ENCODE measurements at regions of chr6 and their contacts with region 1.

Region 1: DNA sequence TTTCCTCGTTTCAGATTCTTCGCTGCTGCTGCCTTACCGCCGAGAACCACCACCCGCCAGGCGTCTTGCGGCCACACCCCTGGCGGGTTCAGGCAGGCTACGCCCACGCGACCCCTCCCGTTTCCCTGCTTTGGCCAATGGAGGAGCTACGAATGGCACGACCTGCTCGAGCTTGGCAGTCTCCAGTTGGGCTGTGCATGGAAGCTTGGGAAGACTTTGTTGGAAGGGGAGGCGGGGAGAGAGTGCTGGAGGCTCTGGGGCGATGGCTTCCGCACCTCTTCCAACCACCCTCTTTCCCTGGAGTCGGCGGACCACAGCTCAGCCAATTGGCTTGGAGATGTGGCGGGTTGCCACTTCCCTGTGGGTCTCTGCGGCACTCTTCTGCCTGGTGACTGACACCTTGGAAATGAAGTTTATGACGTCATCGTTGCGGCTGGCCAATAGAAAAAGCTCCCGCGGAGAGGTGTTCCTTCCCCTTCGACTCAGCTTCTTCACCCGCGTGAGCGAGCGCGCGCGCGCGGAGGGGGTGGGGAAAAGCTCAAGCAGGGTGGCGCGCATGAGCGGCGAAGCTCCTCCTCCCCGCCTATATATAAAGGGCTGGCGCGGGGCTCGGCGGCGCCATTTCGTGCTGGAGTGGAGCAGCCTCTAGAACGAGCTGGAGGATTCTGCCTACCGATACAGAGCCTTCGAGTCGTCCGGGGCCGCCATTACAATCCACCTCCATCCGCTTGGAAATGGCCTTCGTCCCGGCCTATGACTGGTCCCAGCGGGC is 3.4 kb downstream of the BRD2 start:
- DNase-seq: peak; percentile 99 to 100 (median 100)
- ATAC-seq: peak; percentile 73
- H3K4me3 ChIP-seq: peak overlapping the region; percentile 98
- H3K4me3 Mint-ChIP-seq: peak overlapping the region; percentile 89 to 100 (median 98)
- H3K27ac ChIP-seq: peak overlapping the region; percentile 94
- H3K27ac Mint-ChIP-seq: peak overlapping the region; percentile 78 to 100 (median 99)
- H3K4me1 ChIP-seq: peaks cover 26 to 32% of the 10 kb centered on the region in 2 donors
- H3K4me1 Mint-ChIP-seq: peaks cover 31 to 47% (median 40%) of the 10 kb centered on the region in 7 donors
- H3K27me3 ChIP-seq: no peaks in the 10 kb centered on the region
- H3K27me3 Mint-ChIP-seq: peaks cover 0 to 5% (median 0%) of the 10 kb centered on the region in 5 donors

Region 2: DNA sequence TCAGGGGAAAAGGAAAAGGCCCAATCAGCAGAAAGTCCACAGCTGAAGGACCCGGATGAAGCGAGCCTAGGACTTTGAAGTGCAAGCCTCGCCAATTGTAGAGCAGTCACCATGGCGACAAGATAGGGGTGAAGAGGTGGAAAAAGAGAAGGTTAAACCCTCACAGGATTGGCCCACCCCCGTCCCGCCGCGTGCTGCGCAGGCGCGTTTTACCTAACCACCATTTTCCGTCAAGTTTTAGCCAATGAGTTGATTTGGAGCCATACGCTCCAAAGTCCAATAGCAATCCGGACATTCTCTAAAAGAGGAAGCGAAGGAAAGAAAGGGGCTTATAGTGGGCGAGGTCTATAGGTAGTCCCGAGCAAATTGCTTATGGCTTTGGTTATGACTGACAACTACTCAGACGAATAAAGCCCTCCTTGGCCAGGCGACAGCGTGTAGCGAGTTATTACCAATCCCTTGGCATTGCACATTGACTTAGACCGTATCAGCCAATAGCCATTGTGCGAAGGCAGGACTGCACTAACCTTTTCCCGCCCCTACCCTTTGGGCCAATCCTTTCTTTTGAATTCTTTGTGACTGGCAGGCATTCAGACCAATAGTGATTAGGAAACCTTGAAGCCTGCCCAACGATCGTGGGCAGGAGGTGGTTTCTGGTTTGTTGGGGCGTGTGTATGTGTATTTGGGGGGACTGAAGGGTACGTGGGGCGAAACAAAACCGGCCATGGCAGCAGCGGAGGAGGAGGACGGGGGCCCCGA is 793.8 kb before region 1 on chr6 and contains the start of gene RNF5:
- CTCF ChIA-PET with region 1: no interaction called
- POLR2A ChIA-PET with region 1: interaction called, 7 read pairs
- intact Hi-C with region 1: loop called (anchors 1 to 5 kb)
- DNase-seq: peak; percentile 60 to 99 (median 97)
- ATAC-seq: peak; percentile 89
- H3K4me3 ChIP-seq: peak within 1 kb of the TSS; percentile 82
- H3K4me3 Mint-ChIP-seq: peak within 1 kb of the TSS; percentile 85 to 98 (median 95)
- H3K27ac ChIP-seq: peak within 1 kb of the TSS; percentile 91
- H3K27ac Mint-ChIP-seq: peak within 1 kb of the TSS; percentile 87 to 100 (median 95)
- H3K4me1 ChIP-seq: peaks cover 31 to 63% of the 10 kb centered on the region in 2 donors
- H3K4me1 Mint-ChIP-seq: peaks cover 63 to 86% (median 69%) of the 10 kb centered on the region in 7 donors
- H3K27me3 ChIP-seq: no peaks in the 10 kb centered on the region
- H3K27me3 Mint-ChIP-seq: no peaks in the 10 kb centered on the region
- total RNA-seq, gene RNF5: 17.0 to 50.6 (median 40.9) TPM

Region 3: DNA sequence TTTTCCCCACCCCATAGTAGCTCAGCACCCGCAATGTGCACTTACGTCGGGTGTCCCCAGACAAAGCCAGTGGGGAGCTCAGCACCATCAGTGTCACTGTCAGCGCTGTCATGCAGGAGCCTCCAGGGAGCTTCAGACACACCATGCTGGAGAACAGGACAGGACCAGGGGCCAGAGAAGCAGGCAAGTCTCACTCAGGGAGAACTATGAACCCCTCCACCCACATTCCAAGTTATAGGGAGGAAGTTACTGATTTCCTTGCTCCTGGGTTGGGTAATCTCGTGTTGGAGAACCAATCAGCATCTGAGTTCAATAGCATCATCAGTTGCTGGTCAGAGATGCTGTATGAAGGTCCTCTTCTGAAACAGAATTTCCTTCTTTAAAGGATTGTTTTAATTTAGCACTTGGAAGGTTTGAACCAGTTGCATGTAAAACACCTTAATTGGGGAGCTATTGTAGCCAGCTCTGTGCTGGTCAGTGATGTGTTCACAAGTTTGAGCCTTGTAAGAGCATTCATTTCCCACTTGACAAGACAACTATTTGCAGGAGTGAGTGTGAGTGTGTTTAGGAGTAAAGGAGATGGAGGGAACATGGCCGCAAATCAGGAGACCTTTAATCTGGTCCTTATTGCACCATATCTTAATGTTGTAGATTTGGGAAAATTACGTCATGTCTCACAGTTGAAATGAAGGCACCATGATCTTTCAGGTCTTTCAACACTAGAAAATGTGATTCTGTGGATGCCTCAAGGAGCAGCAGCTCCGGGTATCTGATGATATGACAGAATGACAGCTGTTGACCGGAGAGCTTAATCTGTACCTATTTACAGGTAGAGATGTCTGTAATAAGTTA is 381.9 kb before region 1 on chr6 and contains the start of gene HLA-DRB1:
- CTCF ChIA-PET with region 1: no interaction called
- POLR2A ChIA-PET with region 1: no interaction called
- intact Hi-C with region 1: no loop called
- DNase-seq: peak in 3 of 9 donors; percentile 22 to 59 (median 30)
- ATAC-seq: peak; percentile 96
- H3K4me3 ChIP-seq: peak within 1 kb of the TSS; percentile 48
- H3K4me3 Mint-ChIP-seq: peak within 1 kb of the TSS in 8 of 10 donors; percentile 13 to 83 (median 69)
- H3K27ac ChIP-seq: no peak within 1 kb of the TSS
- H3K27ac Mint-ChIP-seq: peak within 1 kb of the TSS in 2 of 9 donors; percentile 15 to 77
- H3K4me1 ChIP-seq: no peaks in the 10 kb centered on the region
- H3K4me1 Mint-ChIP-seq: peaks cover 0 to 25% (median 6%) of the 10 kb centered on the region in 7 donors
- H3K27me3 ChIP-seq: no peaks in the 10 kb centered on the region
- H3K27me3 Mint-ChIP-seq: peaks cover 0 to 5% (median 4%) of the 10 kb centered on the region in 5 donors
- total RNA-seq, gene HLA-DRB1: 16.4 to 229 (median 52.1) TPM

Region 4: DNA sequence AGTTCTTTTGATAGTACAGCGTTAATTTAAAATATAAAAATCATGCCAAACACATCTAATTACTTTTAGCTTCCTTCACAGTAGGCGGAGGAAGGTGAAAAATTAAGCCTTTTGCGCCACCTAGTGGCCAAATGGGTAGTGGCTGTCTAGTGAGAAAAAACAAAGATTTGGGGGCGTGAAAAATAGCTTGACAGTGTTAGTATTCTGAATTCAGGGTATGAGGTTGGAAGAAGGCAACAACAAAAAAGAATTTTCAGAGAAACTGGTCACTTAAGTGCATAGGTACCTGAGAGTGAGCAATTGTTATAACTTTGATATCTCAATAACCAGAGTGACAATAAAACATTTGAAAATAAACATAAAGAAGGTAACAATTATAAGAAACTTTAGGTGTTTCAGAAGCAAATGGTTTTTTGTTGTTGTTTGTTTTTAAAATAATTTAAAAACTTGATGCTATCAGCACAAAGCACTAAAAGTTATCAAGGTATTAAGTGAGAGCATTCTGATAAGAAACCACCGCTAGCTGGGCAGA is 103.4 kb before region 1 on chr6:
- CTCF ChIA-PET with region 1: interaction called, 11 read pairs
- POLR2A ChIA-PET with region 1: interaction called, 17 read pairs
- intact Hi-C with region 1: no loop called
- DNase-seq: peak; percentile 69 to 87 (median 82)
- ATAC-seq: peak; percentile 87
- H3K4me3 ChIP-seq: no peak overlapping the region
- H3K4me3 Mint-ChIP-seq: peak overlapping the region in 3 of 10 donors; percentile 0 to 65 (median 50)
- H3K27ac ChIP-seq: no peak overlapping the region
- H3K27ac Mint-ChIP-seq: peak overlapping the region in 4 of 9 donors; percentile 1 to 78 (median 14)
- H3K4me1 ChIP-seq: peaks cover 4 to 20% of the 10 kb centered on the region in 2 donors
- H3K4me1 Mint-ChIP-seq: peaks cover 18 to 36% (median 34%) of the 10 kb centered on the region in 7 donors
- H3K27me3 ChIP-seq: no peaks in the 10 kb centered on the region
- H3K27me3 Mint-ChIP-seq: peaks cover 0 to 4% (median 0%) of the 10 kb centered on the region in 5 donors

Region 5: GRCh38 chr6:32952817-32953739 is 18.7 kb before region 1 on chr6 and contains the start of gene HLA-DMA:
- CTCF ChIA-PET with region 1: interaction called, 229 read pairs
- POLR2A ChIA-PET with region 1: interaction called, 638 read pairs
- intact Hi-C with region 1: loop called (anchors 1 kb)
- DNase-seq: peak; percentile 52 to 89 (median 83)
- ATAC-seq: peak; percentile 96
- H3K4me3 ChIP-seq: peak within 1 kb of the TSS; percentile 64
- H3K4me3 Mint-ChIP-seq: peak within 1 kb of the TSS; percentile 75 to 86 (median 82)
- H3K27ac ChIP-seq: peak within 1 kb of the TSS; percentile 63
- H3K27ac Mint-ChIP-seq: peak within 1 kb of the TSS; percentile 61 to 94 (median 88)
- H3K4me1 ChIP-seq: peaks cover 21 to 23% of the 10 kb centered on the region in 2 donors
- H3K4me1 Mint-ChIP-seq: peaks cover 44 to 57% (median 48%) of the 10 kb centered on the region in 7 donors
- H3K27me3 ChIP-seq: no peaks in the 10 kb centered on the region
- H3K27me3 Mint-ChIP-seq: no peaks in the 10 kb centered on the region
- total RNA-seq, gene HLA-DMA: 12.5 to 120 (median 29.6) TPM

Region 6: GRCh38 chr6:33276864-33277662 is 305.3 kb after region 1 on chr6 and contains the start of gene B3GALT4:
- CTCF ChIA-PET with region 1: no interaction called
- POLR2A ChIA-PET with region 1: interaction called, 24 read pairs
- intact Hi-C with region 1: loop called in 1 of 2 experiments (anchors 5 kb)
- DNase-seq: peak; percentile 55 to 88 (median 63)
- ATAC-seq: peak; percentile 81
- H3K4me3 ChIP-seq: peak within 1 kb of the TSS; percentile 67
- H3K4me3 Mint-ChIP-seq: peak within 1 kb of the TSS; percentile 84 to 99 (median 92)
- H3K27ac ChIP-seq: peak within 1 kb of the TSS; percentile 87
- H3K27ac Mint-ChIP-seq: peak within 1 kb of the TSS; percentile 88 to 98 (median 93)
- H3K4me1 ChIP-seq: peaks cover 47 to 50% of the 10 kb centered on the region in 2 donors
- H3K4me1 Mint-ChIP-seq: peaks cover 38 to 83% (median 65%) of the 10 kb centered on the region in 7 donors
- H3K27me3 ChIP-seq: no peaks in the 10 kb centered on the region
- H3K27me3 Mint-ChIP-seq: no peaks in the 10 kb centered on the region
- total RNA-seq, gene B3GALT4: 12.9 to 48.0 (median 18.2) TPM

Region 7: DNA sequence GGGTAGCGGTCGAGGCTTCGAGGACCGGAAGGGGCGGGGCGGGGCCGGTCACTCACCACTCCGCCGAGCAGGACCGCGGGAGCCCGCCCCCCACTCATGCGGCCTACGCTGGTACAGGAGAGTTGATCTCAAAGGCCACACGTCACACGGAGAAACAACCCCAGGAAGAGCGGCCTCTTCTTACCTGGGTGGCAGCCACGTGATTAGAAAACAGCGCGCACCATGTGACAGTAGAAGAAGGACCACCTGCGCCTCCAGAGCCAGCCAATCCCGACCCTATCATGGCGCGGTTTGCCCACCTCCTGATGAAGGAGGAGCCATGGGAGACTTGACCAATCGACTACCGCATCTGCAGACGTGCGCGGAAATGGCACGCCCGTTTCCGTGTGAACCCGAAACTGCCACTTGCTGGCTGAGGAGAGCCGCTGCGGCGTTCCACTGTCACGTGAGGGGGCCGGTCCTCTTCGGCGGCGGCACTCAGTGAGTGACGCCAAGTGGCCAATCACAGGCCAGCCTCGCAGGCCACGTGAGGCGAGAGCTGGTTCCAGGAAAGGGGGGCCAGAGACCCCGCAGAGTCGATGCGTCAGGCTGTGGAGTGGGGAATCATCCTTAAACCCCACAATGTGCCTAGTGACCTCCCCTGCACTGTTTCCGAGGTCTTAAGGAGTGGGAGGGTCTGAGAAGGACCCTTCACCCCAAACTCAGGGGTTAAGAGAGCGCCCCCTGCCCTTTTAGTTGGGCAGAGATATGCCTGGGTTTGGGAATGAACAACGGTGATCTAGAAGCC is 446.3 kb after region 1 on chr6 and contains the start of gene CUTA:
- CTCF ChIA-PET with region 1: no interaction called
- POLR2A ChIA-PET with region 1: interaction called, 3 read pairs
- intact Hi-C with region 1: loop called (anchors 2 to 5 kb)
- DNase-seq: peak; percentile 91 to 100 (median 99)
- ATAC-seq: peak; percentile 92
- H3K4me3 ChIP-seq: peak within 1 kb of the TSS; percentile 74
- H3K4me3 Mint-ChIP-seq: peak within 1 kb of the TSS; percentile 88 to 97 (median 94)
- H3K27ac ChIP-seq: peak within 1 kb of the TSS; percentile 94
- H3K27ac Mint-ChIP-seq: peak within 1 kb of the TSS; percentile 98 to 100 (median 99)
- H3K4me1 ChIP-seq: peaks cover 31 to 54% of the 10 kb centered on the region in 2 donors
- H3K4me1 Mint-ChIP-seq: peaks cover 60 to 89% (median 73%) of the 10 kb centered on the region in 7 donors
- H3K27me3 ChIP-seq: no peaks in the 10 kb centered on the region
- H3K27me3 Mint-ChIP-seq: no peaks in the 10 kb centered on the region
- total RNA-seq, gene CUTA: 148 to 235 (median 158) TPM

Measured in naive thymus-derived CD4-positive, alpha-beta T cell (primary cell).